ENCODE measurements at regions of chr6 and their contacts with region 1.

Region 1: DNA sequence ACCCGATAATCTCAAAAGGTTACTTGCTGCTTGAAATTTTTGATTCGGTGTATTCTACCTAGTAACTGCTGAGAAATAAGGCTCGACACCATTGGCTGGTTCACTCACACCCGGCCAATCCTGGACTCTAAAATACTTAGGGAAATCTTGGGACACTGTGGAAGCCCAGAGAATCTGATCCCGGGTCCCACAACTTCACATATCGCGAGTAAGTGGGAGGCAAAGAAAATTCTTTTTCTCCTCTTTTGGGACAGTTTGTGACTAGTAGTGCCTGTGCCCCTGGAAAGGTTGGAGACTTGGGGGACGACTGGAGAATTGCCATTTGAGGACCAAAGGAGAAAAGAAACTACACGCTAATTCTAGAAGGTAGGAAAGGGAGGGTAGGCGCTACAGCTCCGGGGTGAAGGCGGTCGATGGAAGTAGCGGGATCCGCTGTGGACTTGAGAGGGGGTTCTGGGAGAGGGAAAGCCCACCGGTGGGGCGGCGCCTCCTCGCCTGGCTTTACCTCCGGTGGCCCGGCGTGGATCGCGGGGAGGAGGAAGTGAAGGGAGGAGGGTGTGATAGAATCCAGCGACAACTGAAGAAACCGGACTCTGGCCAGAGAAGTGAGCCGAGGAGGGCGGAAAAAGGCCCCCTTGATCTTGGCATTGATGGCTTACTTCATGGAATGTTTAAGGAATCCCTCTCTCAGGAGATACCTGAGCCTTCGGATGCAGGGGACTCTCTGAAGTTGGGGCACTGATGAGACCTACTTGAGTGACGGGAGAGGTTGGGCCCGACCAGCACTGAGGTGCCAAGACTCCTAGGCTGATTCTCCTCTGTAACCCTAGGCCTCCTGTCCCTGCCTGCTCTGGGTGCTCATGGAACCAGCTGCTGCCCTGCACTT is 18.8 kb upstream of the BTN3A3 start:
- DNase-seq: peak in 8 of 9 experiments; percentile 26 to 85 (median 47)
- ATAC-seq: peak; percentile 95
- H3K4me3 ChIP-seq: peak overlapping the region; percentile 76 to 98
- H3K4me3 Mint-ChIP-seq: no peak overlapping the region
- H3K27ac ChIP-seq: peak overlapping the region; percentile 20 to 81
- H3K27ac Mint-ChIP-seq: no peak overlapping the region
- H3K4me1 ChIP-seq: peaks cover 5% of the 10 kb centered on the region
- H3K4me1 Mint-ChIP-seq: peaks cover 16% of the 10 kb centered on the region
- H3K27me3 ChIP-seq: no peaks in the 10 kb centered on the region
- H3K27me3 Mint-ChIP-seq: no peaks in the 10 kb centered on the region
- CTCF ChIP-seq: no peak

Region 2: GRCh38 chr6:26363882-26364701 is 57.4 kb before region 1 on chr6:
- CTCF ChIA-PET with region 1: no interaction called
- POLR2A ChIA-PET with region 1: no interaction called
- intact Hi-C with region 1: loop called in 1 of 2 experiments (anchors 5 kb)
- DNase-seq: peak in 6 of 9 experiments; percentile 9 to 69 (median 34)
- ATAC-seq: no peak
- H3K4me3 ChIP-seq: peak overlapping the region; percentile 90 to 92
- H3K4me3 Mint-ChIP-seq: no peak overlapping the region
- H3K27ac ChIP-seq: peak overlapping the region; percentile 95
- H3K27ac Mint-ChIP-seq: no peak overlapping the region
- H3K4me1 ChIP-seq: peaks cover 51% of the 10 kb centered on the region
- H3K4me1 Mint-ChIP-seq: peaks cover 53% of the 10 kb centered on the region
- H3K27me3 ChIP-seq: no peaks in the 10 kb centered on the region
- H3K27me3 Mint-ChIP-seq: no peaks in the 10 kb centered on the region
- CTCF ChIP-seq: no peak

Region 3: DNA sequence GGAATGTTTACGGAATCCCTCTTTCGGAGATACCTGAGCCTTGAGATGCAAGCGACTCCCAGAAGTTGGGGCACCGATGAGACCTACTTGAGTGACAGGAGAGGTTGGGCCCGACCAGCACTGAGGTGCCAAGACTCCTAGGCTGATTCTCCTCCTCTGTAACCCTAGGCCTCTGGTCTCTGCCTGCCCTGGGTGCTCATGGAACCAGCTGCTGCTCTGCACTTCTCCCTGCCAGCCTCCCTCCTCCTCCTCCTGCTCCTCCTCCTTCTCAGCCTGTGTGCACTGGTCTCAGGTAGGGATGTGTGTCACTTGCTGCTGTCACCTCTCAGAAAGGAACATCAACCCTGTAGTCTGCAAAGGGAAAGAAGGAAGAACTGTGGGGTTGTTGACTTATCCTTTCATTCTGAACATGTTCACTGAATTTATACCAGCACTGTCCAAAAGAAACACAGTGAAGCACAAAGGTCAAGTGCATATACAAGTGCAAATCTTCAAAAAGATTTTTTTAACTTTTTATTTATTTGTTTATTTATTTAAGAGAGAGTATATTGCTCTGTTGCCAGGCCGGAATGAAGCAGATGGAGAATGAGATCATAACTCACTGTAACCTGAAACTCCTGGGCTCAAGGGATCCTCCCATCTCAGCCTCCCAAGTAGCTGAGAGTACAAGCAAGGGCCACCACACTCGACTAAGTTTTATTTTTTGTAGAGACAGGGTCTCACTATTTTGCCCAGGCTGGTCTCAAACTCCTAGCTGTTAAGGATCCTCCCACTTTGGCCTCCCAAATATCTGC is 37.7 kb before region 1 on chr6:
- CTCF ChIA-PET with region 1: no interaction called
- POLR2A ChIA-PET with region 1: interaction called, 3 read pairs
- intact Hi-C with region 1: loop called in 1 of 2 experiments (anchors 1 kb)
- DNase-seq: peak in 5 of 9 experiments; percentile 14 to 57 (median 21)
- ATAC-seq: peak; percentile 25
- H3K4me3 ChIP-seq: peak overlapping the region; percentile 94
- H3K4me3 Mint-ChIP-seq: peak overlapping the region; percentile 98
- H3K27ac ChIP-seq: peak overlapping the region; percentile 73 to 91
- H3K27ac Mint-ChIP-seq: peak overlapping the region; percentile 95
- H3K4me1 ChIP-seq: peaks cover 12% of the 10 kb centered on the region
- H3K4me1 Mint-ChIP-seq: peaks cover 44% of the 10 kb centered on the region
- H3K27me3 ChIP-seq: no peaks in the 10 kb centered on the region
- H3K27me3 Mint-ChIP-seq: no peaks in the 10 kb centered on the region
- CTCF ChIP-seq: no peak

Region 4: GRCh38 chr6:26401987-26402658 is 19.4 kb before region 1 on chr6 and contains the start of gene BTN3A1:
- CTCF ChIA-PET with region 1: no interaction called
- POLR2A ChIA-PET with region 1: no interaction called
- intact Hi-C with region 1: loop called (anchors 1 to 2 kb)
- DNase-seq: peak; percentile 22 to 90 (median 65)
- ATAC-seq: peak; percentile 88
- H3K4me3 ChIP-seq: peak within 1 kb of the TSS; percentile 82 to 91
- H3K4me3 Mint-ChIP-seq: peak within 1 kb of the TSS; percentile 92
- H3K27ac ChIP-seq: peak within 1 kb of the TSS; percentile 92 to 97
- H3K27ac Mint-ChIP-seq: peak within 1 kb of the TSS; percentile 99
- H3K4me1 ChIP-seq: peaks cover 42% of the 10 kb centered on the region
- H3K4me1 Mint-ChIP-seq: peaks cover 50% of the 10 kb centered on the region
- H3K27me3 ChIP-seq: no peaks in the 10 kb centered on the region
- H3K27me3 Mint-ChIP-seq: no peaks in the 10 kb centered on the region
- CTCF ChIP-seq: no peak
- total RNA-seq, gene BTN3A1: 97.0 to 104 TPM

Region 5: DNA sequence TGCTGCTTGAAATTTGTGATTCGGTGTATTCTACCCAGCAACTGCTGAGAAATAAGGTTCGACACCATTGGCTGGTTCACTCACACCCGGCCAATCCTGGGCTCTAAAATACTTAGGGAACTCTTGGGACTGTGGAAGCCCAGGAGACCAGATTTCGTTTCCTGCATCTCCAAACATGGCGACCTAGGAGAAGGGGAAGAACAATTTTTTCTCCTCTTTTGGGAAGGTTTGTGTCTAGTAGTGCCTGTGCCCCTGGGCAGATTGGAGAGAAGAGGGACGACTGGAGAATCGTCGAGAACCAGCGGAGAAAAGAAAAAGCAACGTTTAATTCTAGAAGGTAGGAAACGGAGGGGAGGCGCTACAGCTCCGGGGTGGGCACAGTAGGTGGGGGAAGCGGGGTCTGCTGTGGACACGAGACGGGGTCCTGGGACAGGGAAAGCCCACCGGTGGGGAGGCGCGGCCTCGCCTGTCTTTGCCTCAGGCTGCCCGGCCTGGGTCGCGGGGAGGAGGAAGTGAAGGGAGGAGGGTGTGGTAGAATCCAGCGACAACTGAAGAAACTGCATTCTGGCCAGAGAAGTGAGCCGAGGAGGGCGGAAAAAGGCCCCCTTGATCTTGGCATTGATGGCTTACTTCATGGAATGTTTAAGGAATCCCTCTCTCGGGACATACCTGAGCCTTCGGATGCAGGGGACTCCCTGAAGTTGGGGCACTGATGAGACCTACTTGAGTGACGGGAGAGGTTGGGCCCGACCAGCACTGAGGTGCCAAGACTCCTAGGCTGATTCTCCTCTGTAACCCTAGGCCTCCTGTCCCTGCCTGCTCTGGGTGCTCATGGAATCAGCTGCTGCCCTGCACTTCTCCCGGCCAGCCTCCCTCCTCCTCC is 36.5 kb after region 1 on chr6 and contains the start of gene BTN2A1:
- CTCF ChIA-PET with region 1: no interaction called
- POLR2A ChIA-PET with region 1: no interaction called
- intact Hi-C with region 1: loop called in 1 of 2 experiments (anchors 5 kb)
- DNase-seq: peak; percentile 33 to 93 (median 65)
- ATAC-seq: peak; percentile 96
- H3K4me3 ChIP-seq: peak within 1 kb of the TSS; percentile 64 to 78
- H3K4me3 Mint-ChIP-seq: peak within 1 kb of the TSS; percentile 100
- H3K27ac ChIP-seq: peak within 1 kb of the TSS; percentile 61 to 92
- H3K27ac Mint-ChIP-seq: peak within 1 kb of the TSS; percentile 99
- H3K4me1 ChIP-seq: peaks cover 48% of the 10 kb centered on the region
- H3K4me1 Mint-ChIP-seq: peaks cover 68% of the 10 kb centered on the region
- H3K27me3 ChIP-seq: no peaks in the 10 kb centered on the region
- H3K27me3 Mint-ChIP-seq: no peaks in the 10 kb centered on the region
- CTCF ChIP-seq: no peak
- total RNA-seq, gene BTN2A1: 16.4 to 17.3 TPM

Region 6: GRCh38 chr6:26537846-26538571 is 116.5 kb after region 1 on chr6 and contains the start of gene HMGN4:
- CTCF ChIA-PET with region 1: interaction called, 3 read pairs
- POLR2A ChIA-PET with region 1: interaction called, 4 read pairs
- intact Hi-C with region 1: loop called in 1 of 2 experiments (anchors 2 kb)
- DNase-seq: peak; percentile 65 to 96 (median 79)
- ATAC-seq: peak; percentile 69
- H3K4me3 ChIP-seq: peak within 1 kb of the TSS; percentile 66 to 99
- H3K4me3 Mint-ChIP-seq: peak within 1 kb of the TSS; percentile 89
- H3K27ac ChIP-seq: peak within 1 kb of the TSS; percentile 88 to 93
- H3K27ac Mint-ChIP-seq: peak within 1 kb of the TSS; percentile 92
- H3K4me1 ChIP-seq: peaks cover 32% of the 10 kb centered on the region
- H3K4me1 Mint-ChIP-seq: peaks cover 58% of the 10 kb centered on the region
- H3K27me3 ChIP-seq: no peaks in the 10 kb centered on the region
- H3K27me3 Mint-ChIP-seq: no peaks in the 10 kb centered on the region
- CTCF ChIP-seq: no peak
- total RNA-seq, gene HMGN4: 24.8 to 33.7 TPM

Measured in CD8-positive, alpha-beta T cell (primary cell).